Dendritic cell treated with granulocyte-macrophage colony-stimulating factor and Interleukin-4, amounts not matched to agents 40 ng/mL and 50 ng/mL, for 4 days (primary cell): ENCODE measurements at regions of chr10 and their contacts with region 1.

Region 1: DNA sequence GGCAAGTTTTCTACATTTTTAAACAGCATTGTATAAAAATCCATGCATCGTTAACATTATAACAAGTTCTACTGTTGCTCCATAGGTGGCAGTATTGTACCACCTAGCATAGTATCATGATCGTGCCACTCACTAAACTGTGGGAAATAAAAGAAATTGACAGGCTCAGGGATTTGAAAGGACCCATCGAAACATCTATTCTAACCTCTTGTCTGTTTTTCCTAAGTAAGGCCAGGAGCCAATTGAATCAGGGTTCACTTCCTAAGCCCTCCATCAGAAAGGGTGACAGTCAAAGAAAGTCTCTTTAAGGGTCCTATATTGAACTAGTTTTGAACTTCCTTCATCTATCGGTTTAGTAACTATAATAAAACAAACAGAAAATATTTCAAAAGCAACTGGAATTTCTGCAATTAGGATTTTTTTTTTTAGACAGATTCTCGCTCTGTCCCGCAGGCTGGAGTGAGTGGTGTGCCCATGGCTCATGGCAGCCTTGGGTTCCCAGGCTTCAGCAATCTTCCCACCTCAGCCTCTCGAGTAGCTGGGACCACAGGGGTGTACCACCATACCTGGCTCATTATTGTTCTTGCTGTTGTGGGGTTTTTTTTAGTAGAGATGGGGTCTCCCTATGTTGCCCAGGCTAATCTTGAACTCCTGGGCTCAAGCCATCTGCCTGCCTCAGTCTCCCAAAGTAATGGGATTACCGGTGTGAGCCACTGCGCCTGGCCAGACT is 9.4 kb downstream of the HACD1 start:
- H3K4me3 Mint-ChIP-seq: no peak overlapping the region
- H3K27ac Mint-ChIP-seq: no peak overlapping the region
- H3K4me1 Mint-ChIP-seq: peaks cover 9% of the 10 kb centered on the region
- H3K27me3 Mint-ChIP-seq: no peaks in the 10 kb centered on the region

Region 2: DNA sequence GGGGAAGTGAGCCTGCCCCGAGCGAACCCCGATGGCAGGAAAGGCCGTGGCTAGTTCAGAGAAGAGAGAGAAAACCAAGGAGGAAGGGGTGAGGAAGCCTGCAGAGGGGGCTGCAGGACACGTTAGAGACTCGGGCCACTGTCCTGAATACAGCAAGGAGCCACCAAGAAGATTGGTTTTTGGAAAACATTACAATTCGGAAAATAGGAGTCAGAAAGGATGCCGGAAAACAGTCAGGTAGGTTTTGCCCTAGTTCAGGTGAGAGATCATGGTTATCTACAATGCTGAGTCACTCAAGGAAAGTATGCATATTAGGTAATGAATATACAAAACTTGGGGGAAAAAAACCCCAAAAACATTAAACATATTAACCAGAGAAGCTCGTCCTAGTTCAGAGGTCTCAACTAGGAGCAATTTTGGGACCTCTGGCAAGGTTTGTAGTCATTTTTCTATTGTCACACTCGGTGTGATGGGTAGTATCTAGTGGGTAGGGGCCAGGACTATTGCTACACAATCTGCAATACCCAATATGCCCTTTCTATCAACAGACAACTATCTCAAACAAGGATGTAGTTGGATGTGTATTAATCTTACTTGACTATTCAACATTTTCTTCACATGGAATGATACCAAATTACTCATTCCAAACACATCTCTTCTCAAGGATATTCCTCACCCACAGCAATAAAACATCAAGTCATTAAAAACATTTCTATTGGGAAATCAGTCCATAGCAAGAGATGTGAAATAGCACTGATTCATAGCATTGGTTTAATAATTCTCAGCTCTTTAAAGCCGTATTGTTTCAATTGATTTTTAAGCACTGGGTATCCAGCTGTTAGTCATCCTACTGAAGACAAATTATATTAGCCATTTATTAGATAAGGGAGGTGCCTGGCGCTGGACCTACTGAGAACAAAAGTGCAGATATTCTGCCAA is 716.1 kb before region 1 on chr10:
- intact Hi-C with region 1: no loop called
- H3K4me3 Mint-ChIP-seq: peak overlapping the region; percentile 45
- H3K27ac Mint-ChIP-seq: peak overlapping the region; percentile 11
- H3K4me1 Mint-ChIP-seq: peaks cover 18% of the 10 kb centered on the region
- H3K27me3 Mint-ChIP-seq: peaks cover 5% of the 10 kb centered on the region

Region 3: DNA sequence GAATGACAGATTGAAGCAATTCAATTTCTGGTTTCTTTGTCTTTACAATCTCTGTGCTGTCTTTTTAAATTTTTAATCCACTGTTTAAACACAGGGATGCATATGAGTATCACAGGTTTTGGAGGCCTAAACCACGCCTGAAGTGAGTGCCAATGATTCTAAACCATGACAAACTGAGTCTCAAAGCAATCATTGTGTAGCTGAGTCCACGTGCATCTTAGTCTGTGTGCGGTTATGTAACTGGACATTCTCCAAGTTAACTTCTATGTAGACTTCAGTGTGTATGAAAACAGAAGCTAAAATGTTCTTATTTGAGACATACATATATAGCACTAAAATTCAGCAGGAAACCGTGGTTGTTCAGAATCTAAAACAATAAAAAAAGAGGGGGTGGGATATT is 74.0 kb before region 1 on chr10:
- intact Hi-C with region 1: no loop called
- H3K4me3 Mint-ChIP-seq: no peak overlapping the region
- H3K27ac Mint-ChIP-seq: peak overlapping the region; percentile 17
- H3K4me1 Mint-ChIP-seq: peaks cover 10% of the 10 kb centered on the region
- H3K27me3 Mint-ChIP-seq: no peaks in the 10 kb centered on the region

Region 4: GRCh38 chr10:17737027-17737965 is 129.5 kb after region 1 on chr10:
- intact Hi-C with region 1: loop called (anchors 5 kb)
- H3K4me3 Mint-ChIP-seq: no peak overlapping the region
- H3K27ac Mint-ChIP-seq: peak overlapping the region; percentile 63
- H3K4me1 Mint-ChIP-seq: peaks cover 32% of the 10 kb centered on the region
- H3K27me3 Mint-ChIP-seq: no peaks in the 10 kb centered on the region

Region 5: GRCh38 chr10:18104223-18104872 is 496.6 kb after region 1 on chr10:
- intact Hi-C with region 1: loop called (anchors 1 kb)
- H3K4me3 Mint-ChIP-seq: no peak overlapping the region
- H3K27ac Mint-ChIP-seq: no peak overlapping the region
- H3K4me1 Mint-ChIP-seq: peaks cover 4% of the 10 kb centered on the region
- H3K27me3 Mint-ChIP-seq: no peaks in the 10 kb centered on the region

Region 6: GRCh38 chr10:18214691-18215563 is 607.2 kb after region 1 on chr10:
- intact Hi-C with region 1: loop called (anchors 5 kb)
- H3K4me3 Mint-ChIP-seq: no peak overlapping the region
- H3K27ac Mint-ChIP-seq: no peak overlapping the region
- H3K4me1 Mint-ChIP-seq: peaks cover 24% of the 10 kb centered on the region
- H3K27me3 Mint-ChIP-seq: no peaks in the 10 kb centered on the region

Region 7: DNA sequence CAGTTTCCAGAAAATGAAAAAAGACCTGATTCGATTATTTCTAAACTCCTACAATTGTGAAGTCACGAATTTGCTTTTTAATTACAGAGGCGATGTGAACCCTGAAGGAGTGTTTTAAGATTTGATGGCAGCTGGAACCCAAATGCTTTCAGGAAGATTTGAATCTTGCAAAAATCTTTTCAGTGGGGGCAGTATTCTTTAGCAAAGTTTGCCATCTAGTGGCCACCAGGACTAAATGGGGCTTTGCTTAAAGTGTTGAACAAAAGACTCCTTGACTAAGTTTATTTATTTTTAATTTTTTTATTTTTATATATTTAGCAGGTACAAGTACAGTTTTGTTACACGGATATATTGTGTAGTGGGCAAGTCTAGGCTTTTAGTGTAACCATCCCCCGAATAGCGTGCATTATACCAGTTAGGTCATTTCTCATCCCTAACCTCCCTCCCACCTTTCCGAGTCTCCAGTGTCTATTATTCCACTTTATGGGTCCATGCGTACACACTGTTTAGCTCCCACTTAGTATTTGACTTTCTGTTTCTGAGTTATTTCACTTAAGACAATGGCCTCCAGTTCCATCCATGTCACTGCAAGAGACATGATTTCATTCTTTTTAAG is 631.2 kb after region 1 on chr10:
- intact Hi-C with region 1: loop called (anchors 2 kb)
- H3K4me3 Mint-ChIP-seq: no peak overlapping the region
- H3K27ac Mint-ChIP-seq: no peak overlapping the region
- H3K4me1 Mint-ChIP-seq: peaks cover 16% of the 10 kb centered on the region
- H3K27me3 Mint-ChIP-seq: peaks cover 6% of the 10 kb centered on the region